GM12878 (cell line): ENCODE measurements at regions of chr20 and their contacts with region 1.

Region 1: DNA sequence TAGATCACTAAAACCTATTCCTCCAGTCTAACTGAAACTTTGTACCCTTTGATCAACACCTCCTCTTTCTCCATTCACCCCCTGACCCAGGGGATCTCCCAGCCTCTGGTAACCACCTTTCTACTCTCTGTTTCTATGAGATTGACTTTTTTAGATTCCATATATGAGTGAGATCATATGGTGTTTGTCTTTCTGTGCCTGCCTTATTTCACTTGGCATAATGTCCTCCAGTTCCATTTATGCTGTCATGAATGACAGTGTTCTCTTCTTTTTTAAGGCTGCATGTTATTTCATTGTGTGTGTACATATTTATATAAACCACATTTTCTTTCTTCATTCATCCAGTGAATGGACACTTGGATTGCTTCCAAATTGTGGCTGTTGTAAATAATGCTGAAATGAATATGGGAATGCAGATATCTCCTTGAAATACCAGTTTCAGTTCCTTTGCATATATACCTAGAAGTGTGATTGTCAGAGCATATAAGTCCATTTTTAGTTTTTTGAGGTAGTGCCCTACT is 57.7 kb downstream of the DHX35 start:
- DNase-seq: peak; percentile 79
- ATAC-seq: peak; percentile 92
- H3K4me3 ChIP-seq: peak overlapping the region; percentile 29; the same call in 1 of the 2 replicates
- H3K27ac ChIP-seq: peak overlapping the region; percentile 53
- H3K4me1 ChIP-seq: peaks cover 41% of the 10 kb centered on the region
- H3K27me3 ChIP-seq: no peaks in the 10 kb centered on the region
- CTCF ChIP-seq: no peak
- EP300 ChIP-seq: peak; percentile 44 to 65; a peak in 2 of 4 replicates
- POLR2A ChIP-seq: no peak
- RAD21 ChIP-seq: no peak

Region 2: DNA sequence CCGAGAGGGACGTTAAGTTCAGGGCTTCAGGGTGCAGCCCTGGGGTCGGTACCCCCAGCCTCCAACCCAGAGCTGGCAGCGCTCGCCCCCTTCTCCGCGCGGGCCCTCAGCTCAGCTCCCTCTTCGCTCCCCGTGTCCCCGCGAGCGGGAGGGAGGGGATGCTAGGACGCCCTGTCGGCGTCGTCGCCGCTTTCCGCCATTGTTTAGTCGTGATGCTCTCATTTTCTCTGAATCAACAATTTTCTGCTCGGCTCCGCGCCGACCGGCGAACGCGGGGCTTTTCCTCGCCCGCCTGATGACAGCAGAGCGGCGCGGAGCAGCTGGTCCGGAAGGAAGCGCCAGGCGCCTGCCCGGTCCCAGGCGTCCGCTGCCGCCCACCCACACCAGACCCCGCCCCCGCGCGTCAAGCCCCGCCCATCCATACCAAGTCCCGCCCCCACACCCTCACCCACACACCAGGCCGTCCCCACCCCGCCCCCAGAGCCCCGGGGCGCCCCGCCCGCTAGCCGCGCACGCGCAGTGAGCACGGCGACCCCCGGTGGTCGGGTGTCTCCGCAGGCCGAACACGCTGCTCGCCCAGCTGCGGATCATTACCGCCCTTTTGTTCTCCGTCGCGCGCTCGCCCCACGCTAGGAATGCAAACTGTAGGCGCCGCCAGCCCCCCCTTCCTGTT is 345.6 kb before region 1 on chr20:
- CTCF ChIA-PET with region 1: no interaction called
- POLR2A ChIA-PET with region 1: no interaction called
- RAD21 ChIA-PET with region 1: no interaction called
- SMC1A ChIA-PET with region 1: no interaction called
- in situ Hi-C with region 1: no loop called
- intact Hi-C with region 1: no loop called
- DNase-seq: no peak
- ATAC-seq: peak; percentile 79
- H3K4me3 ChIP-seq: peak overlapping the region; percentile 85
- H3K27ac ChIP-seq: no peak overlapping the region
- H3K4me1 ChIP-seq: peaks cover 4% of the 10 kb centered on the region; the same call in 1 of the 2 replicates
- H3K27me3 ChIP-seq: peaks cover 2 to 8% of the 10 kb centered on the region in 2 experiments; a peak in 3 of 4 replicates
- CTCF ChIP-seq: no peak
- EP300 ChIP-seq: no peak
- POLR2A ChIP-seq: no peak
- RAD21 ChIP-seq: no peak

Region 3: DNA sequence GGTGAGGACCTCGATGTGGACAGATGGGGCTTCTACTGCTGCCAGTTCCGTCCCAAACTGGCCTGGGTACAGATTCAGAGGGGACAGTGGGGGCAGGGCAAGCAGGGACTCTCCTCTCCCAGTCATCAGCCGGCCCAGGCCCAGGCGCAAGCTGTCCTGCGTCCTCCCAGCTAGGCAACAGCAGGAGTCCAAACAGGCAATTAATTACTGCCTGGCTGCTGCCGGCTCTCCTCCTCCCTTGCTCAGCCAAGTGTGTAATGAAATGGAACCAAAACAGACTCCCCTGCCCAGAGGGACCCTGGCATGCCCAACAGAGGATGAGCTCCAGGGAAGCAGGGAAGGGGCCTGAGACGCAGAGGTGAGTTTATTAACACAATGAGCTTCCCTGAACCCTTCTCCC is 313.4 kb before region 1 on chr20:
- CTCF ChIA-PET with region 1: no interaction called
- POLR2A ChIA-PET with region 1: no interaction called
- RAD21 ChIA-PET with region 1: no interaction called
- SMC1A ChIA-PET with region 1: no interaction called
- in situ Hi-C with region 1: no loop called
- intact Hi-C with region 1: no loop called
- DNase-seq: no peak
- ATAC-seq: no peak
- H3K4me3 ChIP-seq: no peak overlapping the region
- H3K27ac ChIP-seq: no peak overlapping the region
- H3K4me1 ChIP-seq: no peaks in the 10 kb centered on the region
- H3K27me3 ChIP-seq: peaks cover 5 to 6% of the 10 kb centered on the region in 2 experiments; a peak in 3 of 4 replicates
- CTCF ChIP-seq: no peak
- EP300 ChIP-seq: no peak
- POLR2A ChIP-seq: no peak
- RAD21 ChIP-seq: no peak

Region 4: GRCh38 chr20:38985603-38986170 is 34.2 kb before region 1 on chr20:
- CTCF ChIA-PET with region 1: interaction called, 5 read pairs
- POLR2A ChIA-PET with region 1: interaction called, 4 read pairs
- RAD21 ChIA-PET with region 1: interaction called, 6 read pairs
- SMC1A ChIA-PET with region 1: interaction called, 18 read pairs
- in situ Hi-C with region 1: no loop called
- intact Hi-C with region 1: loop called (anchors 2 kb)
- DNase-seq: peak; percentile 20
- ATAC-seq: peak; percentile 58
- H3K4me3 ChIP-seq: no peak overlapping the region
- H3K27ac ChIP-seq: peak overlapping the region; percentile 17
- H3K4me1 ChIP-seq: peaks cover 34% of the 10 kb centered on the region
- H3K27me3 ChIP-seq: no peaks in the 10 kb centered on the region
- CTCF ChIP-seq: no peak
- EP300 ChIP-seq: no peak
- POLR2A ChIP-seq: no peak
- RAD21 ChIP-seq: no peak

Region 5: DNA sequence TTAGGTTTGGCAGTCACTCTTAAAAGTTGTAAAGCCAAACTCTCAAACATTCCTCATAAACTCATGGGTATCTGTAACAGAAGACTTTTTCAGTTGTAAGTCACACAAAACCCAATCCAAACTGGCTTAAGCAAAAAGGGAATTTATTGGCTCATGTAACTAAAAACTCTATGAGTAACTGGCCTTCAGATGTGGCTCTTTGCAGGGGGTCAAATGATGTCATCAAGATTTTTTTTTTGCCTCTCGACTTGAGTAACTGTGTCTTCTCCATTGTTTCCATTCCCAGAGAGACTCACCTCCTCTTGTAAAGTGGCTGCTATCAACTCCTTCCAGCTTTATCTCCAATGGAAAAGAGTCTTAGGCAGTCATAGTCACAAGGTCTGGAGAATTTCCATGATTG is 587.3 kb after region 1 on chr20:
- CTCF ChIA-PET with region 1: no interaction called
- POLR2A ChIA-PET with region 1: no interaction called
- RAD21 ChIA-PET with region 1: no interaction called
- SMC1A ChIA-PET with region 1: no interaction called
- in situ Hi-C with region 1: no loop called
- intact Hi-C with region 1: no loop called
- DNase-seq: no peak
- ATAC-seq: no peak
- H3K4me3 ChIP-seq: no peak overlapping the region
- H3K27ac ChIP-seq: no peak overlapping the region
- H3K4me1 ChIP-seq: no peaks in the 10 kb centered on the region
- H3K27me3 ChIP-seq: no peaks in the 10 kb centered on the region
- CTCF ChIP-seq: no peak
- EP300 ChIP-seq: no peak
- POLR2A ChIP-seq: no peak
- RAD21 ChIP-seq: no peak